HepG2 (cell line): ENCODE measurements at regions of chr9 and their contacts with region 1.

Region 1: DNA sequence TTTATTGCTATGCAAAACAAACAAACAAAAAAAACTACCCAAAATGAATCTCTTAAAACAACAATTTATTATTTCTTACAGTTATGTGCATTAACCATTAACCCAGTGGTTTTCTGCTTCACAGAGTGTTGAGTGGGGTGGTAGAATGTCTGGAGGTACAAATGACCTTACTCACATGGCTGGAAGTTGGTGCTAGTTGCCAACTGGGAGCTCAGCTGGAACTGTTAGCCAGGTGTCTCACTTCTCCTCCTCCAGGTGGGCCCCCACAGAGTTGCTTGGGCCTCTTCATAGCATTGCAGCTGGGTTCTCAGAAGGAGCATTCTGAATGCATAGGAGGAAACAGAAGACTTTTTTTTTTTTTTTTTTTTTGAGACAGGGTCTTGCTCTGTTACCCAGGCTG is 10.5 kb upstream of the B4GALT1 start:
- DNase-seq: no peak
- ATAC-seq: no peak
- H3K4me3 ChIP-seq: no peak overlapping the region
- H3K27ac ChIP-seq: no peak overlapping the region
- H3K4me1 ChIP-seq: peaks cover 16% of the 10 kb centered on the region
- H3K27me3 ChIP-seq: no peaks in the 10 kb centered on the region; a peak in 1 of 5 replicates
- CTCF ChIP-seq: no peak
- EP300 ChIP-seq: no peak
- POLR2A ChIP-seq: no peak
- RAD21 ChIP-seq: no peak

Region 2: DNA sequence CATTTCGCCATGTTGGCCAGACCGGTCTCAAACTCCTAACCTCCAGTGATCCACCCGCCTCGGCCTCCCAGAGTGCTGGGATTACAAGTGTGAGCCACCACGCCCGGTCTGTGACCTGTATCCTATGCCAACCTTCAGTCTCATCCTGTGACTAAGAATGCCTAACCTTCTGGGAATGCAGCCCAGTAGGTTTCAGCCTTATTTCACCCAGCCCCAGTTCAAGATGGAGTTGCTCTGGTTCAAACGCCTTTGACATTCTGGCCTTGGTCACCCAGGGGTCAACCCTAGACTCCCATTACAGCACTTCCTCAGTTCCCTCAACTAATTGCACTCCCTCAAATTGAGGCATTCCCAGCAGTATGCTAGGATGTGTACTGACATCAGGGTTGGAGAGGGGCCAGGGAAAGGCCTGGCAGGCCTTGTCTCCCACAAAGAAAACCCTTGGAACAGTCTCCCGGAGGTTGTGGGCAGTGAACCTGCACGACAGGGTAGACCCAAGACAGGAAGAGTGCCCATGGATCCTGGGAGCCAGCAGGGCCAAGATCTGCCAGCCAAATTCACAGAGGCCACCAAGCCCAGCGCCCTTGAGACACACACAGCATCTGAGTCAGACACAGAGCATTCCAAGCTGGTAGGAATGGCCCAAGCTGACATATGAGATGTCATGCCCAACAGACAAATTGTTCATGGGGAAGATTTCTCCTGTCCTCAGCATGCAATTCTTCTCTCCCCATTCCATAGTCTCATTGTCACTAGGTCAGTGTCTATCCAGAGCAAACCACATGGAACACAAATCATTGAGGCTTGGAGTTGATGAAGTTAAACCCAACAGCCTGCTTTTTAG is 76.3 kb before region 1 on chr9:
- CTCF ChIA-PET with region 1: no interaction called
- POLR2A ChIA-PET with region 1: no interaction called
- in situ Hi-C with region 1: no loop called
- intact Hi-C with region 1: loop called (anchors 5 kb)
- DNase-seq: no peak
- ATAC-seq: peak; percentile 30; the same call in 2 of the 3 replicates
- H3K4me3 ChIP-seq: no peak overlapping the region
- H3K27ac ChIP-seq: no peak overlapping the region
- H3K4me1 ChIP-seq: peaks cover 15% of the 10 kb centered on the region; the same call in 1 of the 2 replicates
- H3K27me3 ChIP-seq: peaks cover 0 to 2% of the 10 kb centered on the region in 2 experiments; a peak in 2 of 5 replicates
- CTCF ChIP-seq: no peak
- EP300 ChIP-seq: no peak
- POLR2A ChIP-seq: no peak
- RAD21 ChIP-seq: no peak

Region 3: GRCh38 chr9:33211695-33212393 is 34.2 kb after region 1 on chr9:
- CTCF ChIA-PET with region 1: no interaction called
- POLR2A ChIA-PET with region 1: no interaction called
- in situ Hi-C with region 1: no loop called
- intact Hi-C with region 1: no loop called
- DNase-seq: no peak
- ATAC-seq: no peak
- H3K4me3 ChIP-seq: no peak overlapping the region
- H3K27ac ChIP-seq: no peak overlapping the region
- H3K4me1 ChIP-seq: no peaks in the 10 kb centered on the region
- H3K27me3 ChIP-seq: peaks cover 0 to 5% of the 10 kb centered on the region in 2 experiments; a peak in 1 of 5 replicates
- CTCF ChIP-seq: peak; percentile 15; the same call in 1 of the 2 replicates
- EP300 ChIP-seq: no peak
- POLR2A ChIP-seq: no peak
- RAD21 ChIP-seq: no peak